HEK293 (cell line): ENCODE measurements at regions of chr2 and their contacts with region 1.

Region 1: DNA sequence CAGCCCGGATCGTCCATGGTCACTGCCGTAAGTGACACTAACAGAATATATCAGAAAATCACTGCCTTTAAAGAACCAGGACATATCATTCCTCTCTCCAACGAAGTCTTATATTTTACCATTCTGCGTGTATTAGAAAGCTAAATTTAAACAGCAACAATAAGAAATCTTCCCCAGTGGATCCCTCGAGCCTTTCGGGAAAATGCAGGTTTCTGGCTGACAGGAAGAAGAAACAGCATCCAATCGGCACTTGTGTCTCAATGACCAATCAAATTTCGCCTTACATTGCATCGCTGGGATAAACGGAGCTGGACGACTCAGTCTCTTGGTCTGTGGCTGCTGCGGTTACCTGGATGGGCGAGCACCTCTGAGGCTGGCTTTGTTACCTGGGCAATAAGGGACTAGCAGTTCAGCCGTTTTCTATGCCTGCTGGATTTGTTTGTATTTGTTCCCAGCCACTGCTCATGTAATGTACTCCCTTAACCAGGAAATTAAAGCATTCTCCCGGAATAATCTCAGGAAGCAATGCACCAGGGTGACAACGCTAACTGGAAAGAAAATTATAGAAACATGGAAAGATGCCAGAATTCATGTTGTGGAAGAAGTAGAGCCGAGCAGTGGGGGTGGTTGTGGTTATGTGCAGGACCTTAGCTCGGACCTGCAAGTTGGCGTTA is at the start of gene DUSP19:
- H3K4me3 ChIP-seq: peak within 1 kb of the TSS; percentile 79
- H3K27ac ChIP-seq: peak within 1 kb of the TSS; percentile 35; the same call in 1 of the 2 replicates
- H3K4me1 ChIP-seq: peaks cover 5% of the 10 kb centered on the region; the same call in 1 of the 2 replicates
- CTCF ChIP-seq: no peak

Region 2: GRCh38 chr2:183038341-183039300 is 40.0 kb before region 1 on chr2 and contains the start of gene NCKAP1:
- CTCF ChIA-PET with region 1: no interaction called
- POLR2A ChIA-PET with region 1: no interaction called
- H3K4me3 ChIP-seq: peak within 1 kb of the TSS; percentile 91
- H3K27ac ChIP-seq: peak within 1 kb of the TSS; percentile 95
- H3K4me1 ChIP-seq: 0 out of 2 replicates have a peak, but pooled peaks cover 3% of the 10 kb centered on the region
- CTCF ChIP-seq: no peak

Region 3: DNA sequence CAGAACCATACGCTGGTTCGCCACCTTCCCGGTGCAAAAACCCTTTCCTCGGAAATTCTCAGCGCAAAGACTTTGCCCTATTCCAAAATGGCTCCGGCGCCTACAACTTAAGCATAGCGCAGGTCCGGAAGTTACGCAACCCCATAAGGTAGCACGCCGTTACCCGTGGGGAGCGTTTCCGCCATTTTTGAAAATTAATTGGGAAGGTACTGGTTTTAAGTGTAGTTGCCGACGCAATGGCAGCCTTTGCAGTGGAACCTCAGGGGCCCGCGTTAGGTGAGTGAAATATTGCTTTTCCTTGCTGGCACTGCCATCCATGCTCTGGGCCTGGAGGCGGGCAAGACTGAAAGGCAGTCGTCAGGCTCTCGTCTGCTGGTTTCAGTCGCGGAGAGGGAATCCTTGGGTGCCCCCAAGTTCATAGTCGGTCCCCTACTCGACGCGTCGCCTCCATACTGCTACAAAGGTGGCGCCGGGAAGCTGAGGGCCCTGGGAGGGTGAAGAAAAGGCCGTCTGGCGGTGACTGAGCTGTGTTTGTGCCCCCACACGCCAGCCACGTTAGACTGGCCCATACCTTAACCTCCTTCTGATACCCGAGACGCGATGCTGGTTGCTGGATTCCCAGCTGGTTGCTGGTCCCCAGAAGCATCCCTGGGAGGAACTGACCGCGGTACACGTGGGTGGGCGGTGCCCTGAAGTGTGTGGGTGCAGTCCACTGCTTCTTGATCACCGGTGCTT is 45.8 kb after region 1 on chr2 and contains the start of gene NUP35:
- CTCF ChIA-PET with region 1: no interaction called
- POLR2A ChIA-PET with region 1: interaction called, 18 read pairs
- H3K4me3 ChIP-seq: peak within 1 kb of the TSS; percentile 81
- H3K27ac ChIP-seq: peak within 1 kb of the TSS; percentile 75
- H3K4me1 ChIP-seq: no peaks in the 10 kb centered on the region
- CTCF ChIP-seq: no peak